ENCODE measurements at regions of chr1 and their contacts with region 1.

Region 1: GRCh38 chr1:61504852-61505390 is 220.0 kb downstream of the TM2D1 start:
- DNase-seq: no peak
- H3K4me3 ChIP-seq: no peak overlapping the region
- H3K27ac ChIP-seq: no peak overlapping the region
- H3K4me1 ChIP-seq: no peaks in the 10 kb centered on the region
- H3K27me3 ChIP-seq: no peaks in the 10 kb centered on the region
- CTCF ChIP-seq: no peak
- POLR2A ChIP-seq: no peak

Region 2: GRCh38 chr1:61518670-61519400 is 13.9 kb after region 1 on chr1:
- intact Hi-C with region 1: loop called (anchors 1 kb)
- DNase-seq: no peak
- H3K4me3 ChIP-seq: no peak overlapping the region
- H3K27ac ChIP-seq: no peak overlapping the region
- H3K4me1 ChIP-seq: no peaks in the 10 kb centered on the region
- H3K27me3 ChIP-seq: no peaks in the 10 kb centered on the region
- CTCF ChIP-seq: no peak
- POLR2A ChIP-seq: no peak

Measured in breast epithelium (tissue), 4 donors.